ENCODE measurements at regions of chr16 and their contacts with region 1.

Region 1: GRCh38 chr16:67883872-67884261 is 818 bp upstream of the NRN1L start:
- DNase-seq: peak; percentile 27 to 53 (median 47)
- H3K4me3 ChIP-seq: no peak overlapping the region
- H3K4me3 Mint-ChIP-seq: no peak overlapping the region
- H3K27ac ChIP-seq: peak overlapping the region in 1 of 2 donors; percentile 11
- H3K27ac Mint-ChIP-seq: peak overlapping the region in 1 of 7 donors; percentile 43
- H3K4me1 ChIP-seq: no peaks in the 10 kb centered on the region
- H3K4me1 Mint-ChIP-seq: no peaks in the 10 kb centered on the region
- H3K27me3 ChIP-seq: no peaks in the 10 kb centered on the region
- H3K27me3 Mint-ChIP-seq: peaks cover 0 to 2% (median 2%) of the 10 kb centered on the region in 3 donors
- CTCF ChIP-seq: peak; percentile 93

Region 2: GRCh38 chr16:68049449-68049848 is 165.6 kb after region 1 on chr16:
- intact Hi-C with region 1: loop called in 1 of 2 experiments (anchors 5 kb)
- DNase-seq: peak in 1 of 3 donors; percentile 46
- H3K4me3 ChIP-seq: no peak overlapping the region
- H3K4me3 Mint-ChIP-seq: no peak overlapping the region
- H3K27ac ChIP-seq: peak overlapping the region; percentile 28 to 64
- H3K27ac Mint-ChIP-seq: peak overlapping the region in 3 of 7 donors; percentile 7 to 72 (median 47)
- H3K4me1 ChIP-seq: peaks cover 9 to 13% of the 10 kb centered on the region in 2 donors
- H3K4me1 Mint-ChIP-seq: peaks cover 29% of the 10 kb centered on the region
- H3K27me3 ChIP-seq: no peaks in the 10 kb centered on the region
- H3K27me3 Mint-ChIP-seq: peaks cover 1 to 3% (median 1%) of the 10 kb centered on the region in 3 donors
- CTCF ChIP-seq: no peak

Region 3: GRCh38 chr16:68237243-68238028 is 353.6 kb after region 1 on chr16:
- intact Hi-C with region 1: loop called in 1 of 2 experiments (anchors 10 kb)
- DNase-seq: peak; percentile 78 to 86 (median 82)
- H3K4me3 ChIP-seq: peak overlapping the region; percentile 46 to 85 (median 70)
- H3K4me3 Mint-ChIP-seq: peak overlapping the region; percentile 97 to 99
- H3K27ac ChIP-seq: peak overlapping the region; percentile 28 to 67
- H3K27ac Mint-ChIP-seq: peak overlapping the region; percentile 78 to 91 (median 90)
- H3K4me1 ChIP-seq: peaks cover 25 to 49% of the 10 kb centered on the region in 2 donors
- H3K4me1 Mint-ChIP-seq: peaks cover 28% of the 10 kb centered on the region
- H3K27me3 ChIP-seq: peaks cover 9 to 33% of the 10 kb centered on the region in 2 donors
- H3K27me3 Mint-ChIP-seq: peaks cover 28 to 42% (median 33%) of the 10 kb centered on the region in 3 donors
- CTCF ChIP-seq: no peak